Vagina (tissue), 2 donors: ENCODE measurements at regions of chr11 and their contacts with region 1.

Region 1: DNA sequence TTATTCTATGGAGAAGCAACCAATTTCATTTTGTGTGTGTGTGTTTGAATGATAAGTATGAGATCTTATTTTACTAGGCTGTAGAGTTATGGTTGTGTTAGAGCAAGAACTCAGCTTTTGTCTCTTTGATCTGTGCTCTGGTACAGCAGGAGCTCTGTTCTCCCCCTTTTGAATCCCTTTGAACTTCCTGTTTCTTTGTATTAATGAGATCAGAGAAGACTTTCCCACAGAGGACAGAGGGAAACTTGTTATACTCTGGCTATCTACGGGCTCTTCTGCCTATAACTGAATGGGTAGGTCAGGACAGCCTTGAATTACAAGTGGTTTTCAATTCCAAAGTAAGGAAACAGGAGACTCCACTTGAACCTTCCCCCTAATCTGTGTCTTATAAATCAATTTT is 1015.0 kb upstream of the RAG2 start:
- DNase-seq: no peak
- H3K4me3 ChIP-seq: no peak overlapping the region
- H3K27ac ChIP-seq: no peak overlapping the region
- H3K4me1 ChIP-seq: no peaks in the 10 kb centered on the region
- H3K27me3 ChIP-seq: no peaks in the 10 kb centered on the region
- CTCF ChIP-seq: no peak
- POLR2A ChIP-seq: no peak

Region 2: DNA sequence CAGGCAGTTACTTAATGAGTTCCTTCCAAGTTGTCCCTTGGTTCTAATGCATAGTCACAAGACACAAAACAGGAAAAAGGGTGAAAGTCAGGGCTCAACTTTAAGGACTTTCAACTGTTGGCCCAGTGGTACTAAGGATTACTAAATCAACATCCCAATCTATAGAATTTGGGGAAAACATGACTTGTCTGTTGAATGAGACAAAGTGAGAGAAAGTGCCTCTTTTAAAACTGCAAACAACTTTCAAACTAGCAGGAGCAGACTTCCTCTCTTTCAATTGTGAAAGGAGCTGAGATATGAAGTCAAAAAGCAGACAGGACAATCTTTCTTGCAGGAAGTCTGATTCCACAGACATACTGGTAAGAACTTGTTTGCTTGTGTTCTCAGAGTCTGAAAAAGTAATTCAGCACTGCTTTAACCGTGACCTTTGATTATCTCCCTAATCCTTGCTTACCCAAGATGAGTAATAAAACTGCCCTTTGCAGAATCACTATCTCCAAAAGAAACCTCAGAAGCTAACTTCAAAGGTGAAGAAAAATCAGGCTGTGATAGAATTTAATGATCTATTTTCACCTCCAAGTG is 54.3 kb before region 1 on chr11:
- intact Hi-C with region 1: no loop called
- DNase-seq: no peak
- H3K4me3 ChIP-seq: no peak overlapping the region
- H3K27ac ChIP-seq: no peak overlapping the region
- H3K4me1 ChIP-seq: no peaks in the 10 kb centered on the region
- H3K27me3 ChIP-seq: no peaks in the 10 kb centered on the region
- CTCF ChIP-seq: no peak
- POLR2A ChIP-seq: no peak

Region 3: DNA sequence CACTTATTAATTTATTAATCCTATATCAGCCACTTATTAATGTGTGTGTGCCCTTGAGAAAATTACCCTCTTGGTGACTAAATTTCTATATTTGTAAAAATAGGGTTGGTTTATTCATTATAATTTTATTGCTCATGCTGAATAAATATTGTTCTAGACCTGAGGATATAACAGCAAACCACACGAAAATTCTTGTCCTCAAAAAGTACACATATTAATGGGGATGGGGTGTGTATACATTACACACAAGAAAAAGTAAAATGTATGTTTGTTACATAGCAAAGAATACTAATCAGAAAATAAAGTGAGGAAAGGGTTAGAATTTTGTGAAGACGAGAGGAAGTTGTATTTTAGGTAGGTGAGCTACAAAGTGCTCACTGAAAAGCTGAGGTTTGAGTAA is 53.9 kb after region 1 on chr11:
- intact Hi-C with region 1: no loop called
- DNase-seq: no peak
- H3K4me3 ChIP-seq: no peak overlapping the region
- H3K27ac ChIP-seq: no peak overlapping the region
- H3K4me1 ChIP-seq: no peaks in the 10 kb centered on the region
- H3K27me3 ChIP-seq: no peaks in the 10 kb centered on the region
- CTCF ChIP-seq: no peak
- POLR2A ChIP-seq: no peak

Region 4: DNA sequence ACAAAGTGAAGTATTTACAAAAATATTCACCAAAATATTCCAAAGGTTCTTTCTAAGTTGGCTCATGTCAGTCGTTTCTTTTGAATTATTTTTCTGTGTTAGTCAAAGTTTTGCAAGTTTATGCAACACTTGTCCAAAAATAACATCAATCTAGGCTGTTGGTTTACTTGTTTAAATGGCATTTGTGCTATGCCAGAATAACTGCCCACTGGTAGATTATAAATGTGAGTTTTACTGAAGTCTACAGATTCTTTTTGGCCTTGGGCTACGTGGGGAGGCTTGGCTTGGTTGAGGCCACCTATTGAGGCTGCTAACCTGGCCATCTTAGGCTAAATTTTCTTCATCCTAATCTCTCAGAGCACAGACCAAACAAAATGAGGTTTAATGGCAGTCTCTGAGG is 76.9 kb after region 1 on chr11:
- intact Hi-C with region 1: loop called (anchors 10 kb)
- DNase-seq: no peak
- H3K4me3 ChIP-seq: no peak overlapping the region
- H3K27ac ChIP-seq: no peak overlapping the region
- H3K4me1 ChIP-seq: no peaks in the 10 kb centered on the region
- H3K27me3 ChIP-seq: no peaks in the 10 kb centered on the region
- CTCF ChIP-seq: no peak
- POLR2A ChIP-seq: no peak